Ovary (tissue), 10 donors: ENCODE measurements at regions of chr10 and their contacts with region 1.

Region 1: GRCh38 chr10:90912174-90912573 is 8.7 kb downstream of the ANKRD1 start:
- DNase-seq: no peak
- H3K4me3 ChIP-seq: no peak overlapping the region
- H3K27ac ChIP-seq: no peak overlapping the region
- H3K4me1 ChIP-seq: no peaks in the 10 kb centered on the region
- H3K27me3 ChIP-seq: no peaks in the 10 kb centered on the region
- CTCF ChIP-seq: no peak
- EP300 ChIP-seq: no peak
- POLR2A ChIP-seq: no peak

Region 2: GRCh38 chr10:91006001-91006751 is 94.0 kb after region 1 on chr10:
- intact Hi-C with region 1: loop called in 1 of 4 experiments (anchors 10 kb)
- DNase-seq: peak; percentile 34 to 67 (median 53)
- H3K4me3 ChIP-seq: no peak overlapping the region
- H3K27ac ChIP-seq: no peak overlapping the region
- H3K4me1 ChIP-seq: no peaks in the 10 kb centered on the region
- H3K27me3 ChIP-seq: no peaks in the 10 kb centered on the region
- CTCF ChIP-seq: peak; percentile 62 to 93 (median 89)
- EP300 ChIP-seq: no peak
- POLR2A ChIP-seq: no peak